ENCODE measurements at regions of chr1 and their contacts with region 1.

Region 1: GRCh38 chr1:21368515-21369289 is 71.2 kb upstream of the NBPF3 start:
- DNase-seq: peak; percentile 85
- ATAC-seq: peak; percentile 85
- H3K4me3 Mint-ChIP-seq: no peak overlapping the region
- H3K27ac Mint-ChIP-seq: no peak overlapping the region
- H3K4me1 Mint-ChIP-seq: 0 out of 2 replicates have a peak, but pooled peaks cover 3% of the 10 kb centered on the region
- H3K27me3 Mint-ChIP-seq: no peaks in the 10 kb centered on the region
- CTCF ChIP-seq: peak; percentile 91

Region 2: GRCh38 chr1:21200767-21201166 is 167.9 kb before region 1 on chr1:
- CTCF ChIA-PET with region 1: interaction called, 23 read pairs
- POLR2A ChIA-PET with region 1: no interaction called
- DNase-seq: no peak
- ATAC-seq: no peak
- H3K4me3 Mint-ChIP-seq: no peak overlapping the region
- H3K27ac Mint-ChIP-seq: no peak overlapping the region
- H3K4me1 Mint-ChIP-seq: no peaks in the 10 kb centered on the region
- H3K27me3 Mint-ChIP-seq: peaks cover 36% of the 10 kb centered on the region
- CTCF ChIP-seq: no peak

Region 3: GRCh38 chr1:21244986-21245687 is 123.6 kb before region 1 on chr1:
- CTCF ChIA-PET with region 1: interaction called, 41 read pairs
- POLR2A ChIA-PET with region 1: no interaction called
- DNase-seq: peak; percentile 67
- ATAC-seq: peak; percentile 88
- H3K4me3 Mint-ChIP-seq: no peak overlapping the region
- H3K27ac Mint-ChIP-seq: no peak overlapping the region
- H3K4me1 Mint-ChIP-seq: peaks cover 7% of the 10 kb centered on the region
- H3K27me3 Mint-ChIP-seq: no peaks in the 10 kb centered on the region
- CTCF ChIP-seq: peak; percentile 66

Region 4: GRCh38 chr1:21280011-21280471 is 88.7 kb before region 1 on chr1:
- CTCF ChIA-PET with region 1: interaction called, 17 read pairs
- POLR2A ChIA-PET with region 1: no interaction called
- DNase-seq: no peak
- ATAC-seq: no peak
- H3K4me3 Mint-ChIP-seq: no peak overlapping the region
- H3K27ac Mint-ChIP-seq: no peak overlapping the region
- H3K4me1 Mint-ChIP-seq: peaks cover 31% of the 10 kb centered on the region
- H3K27me3 Mint-ChIP-seq: no peaks in the 10 kb centered on the region
- CTCF ChIP-seq: no peak

Region 5: GRCh38 chr1:21334214-21335087 is 34.3 kb before region 1 on chr1:
- CTCF ChIA-PET with region 1: interaction called, 22 read pairs
- POLR2A ChIA-PET with region 1: no interaction called
- DNase-seq: peak; percentile 84
- ATAC-seq: peak; percentile 86
- H3K4me3 Mint-ChIP-seq: peak overlapping the region; percentile 59
- H3K27ac Mint-ChIP-seq: peak overlapping the region; percentile 84
- H3K4me1 Mint-ChIP-seq: peaks cover 61% of the 10 kb centered on the region
- H3K27me3 Mint-ChIP-seq: no peaks in the 10 kb centered on the region; the same call in 1 of the 2 replicates
- CTCF ChIP-seq: peak; percentile 65; the same call in 1 of the 2 replicates

Region 6: DNA sequence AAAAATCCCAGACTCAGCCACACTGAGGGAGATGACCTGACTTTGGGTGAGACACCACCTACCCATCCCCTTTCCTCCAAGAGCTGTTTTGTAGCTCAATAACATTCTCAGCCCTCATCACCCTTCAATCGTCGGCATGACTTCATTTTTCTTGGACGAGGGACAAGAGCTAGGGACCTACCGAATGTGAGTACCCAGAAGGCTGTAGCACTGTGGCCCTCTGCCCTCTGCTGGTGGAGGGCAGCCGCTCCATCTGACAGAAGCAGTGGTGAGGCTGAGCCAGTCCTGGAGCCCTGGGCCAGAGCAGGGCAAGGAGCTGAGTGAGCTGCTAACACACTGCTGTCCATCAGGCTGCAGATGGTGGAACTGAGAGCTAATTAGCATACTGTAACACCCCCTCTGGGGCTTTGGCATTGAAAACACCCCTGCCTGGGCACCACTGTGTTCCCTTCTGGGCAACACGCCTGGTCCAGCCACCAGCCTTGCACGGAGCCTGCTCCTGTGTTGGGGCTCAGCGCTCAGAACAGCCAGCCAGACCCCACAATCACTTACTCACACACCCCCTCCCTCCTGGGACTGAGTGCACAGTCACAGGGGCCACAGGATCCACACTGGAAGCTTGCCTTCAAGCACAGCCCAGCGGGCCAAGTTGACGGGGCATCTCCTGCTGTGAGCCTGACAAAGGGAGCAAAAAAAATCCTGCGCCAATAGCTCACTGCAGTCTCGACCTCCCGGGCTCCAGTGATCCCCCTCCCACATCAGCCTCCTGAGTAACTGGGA is 122.3 kb after region 1 on chr1:
- CTCF ChIA-PET with region 1: interaction called, 52 read pairs
- POLR2A ChIA-PET with region 1: no interaction called
- DNase-seq: peak; percentile 56
- ATAC-seq: peak; percentile 87
- H3K4me3 Mint-ChIP-seq: no peak overlapping the region
- H3K27ac Mint-ChIP-seq: no peak overlapping the region
- H3K4me1 Mint-ChIP-seq: peaks cover 11% of the 10 kb centered on the region
- H3K27me3 Mint-ChIP-seq: peaks cover 3% of the 10 kb centered on the region; the same call in 1 of the 2 replicates
- CTCF ChIP-seq: no peak

Measured in WTC11 (cell line).